Naive thymus-derived CD4-positive, alpha-beta T cell (primary cell): ENCODE measurements at regions of chr2 and their contacts with region 1.

Region 1: DNA sequence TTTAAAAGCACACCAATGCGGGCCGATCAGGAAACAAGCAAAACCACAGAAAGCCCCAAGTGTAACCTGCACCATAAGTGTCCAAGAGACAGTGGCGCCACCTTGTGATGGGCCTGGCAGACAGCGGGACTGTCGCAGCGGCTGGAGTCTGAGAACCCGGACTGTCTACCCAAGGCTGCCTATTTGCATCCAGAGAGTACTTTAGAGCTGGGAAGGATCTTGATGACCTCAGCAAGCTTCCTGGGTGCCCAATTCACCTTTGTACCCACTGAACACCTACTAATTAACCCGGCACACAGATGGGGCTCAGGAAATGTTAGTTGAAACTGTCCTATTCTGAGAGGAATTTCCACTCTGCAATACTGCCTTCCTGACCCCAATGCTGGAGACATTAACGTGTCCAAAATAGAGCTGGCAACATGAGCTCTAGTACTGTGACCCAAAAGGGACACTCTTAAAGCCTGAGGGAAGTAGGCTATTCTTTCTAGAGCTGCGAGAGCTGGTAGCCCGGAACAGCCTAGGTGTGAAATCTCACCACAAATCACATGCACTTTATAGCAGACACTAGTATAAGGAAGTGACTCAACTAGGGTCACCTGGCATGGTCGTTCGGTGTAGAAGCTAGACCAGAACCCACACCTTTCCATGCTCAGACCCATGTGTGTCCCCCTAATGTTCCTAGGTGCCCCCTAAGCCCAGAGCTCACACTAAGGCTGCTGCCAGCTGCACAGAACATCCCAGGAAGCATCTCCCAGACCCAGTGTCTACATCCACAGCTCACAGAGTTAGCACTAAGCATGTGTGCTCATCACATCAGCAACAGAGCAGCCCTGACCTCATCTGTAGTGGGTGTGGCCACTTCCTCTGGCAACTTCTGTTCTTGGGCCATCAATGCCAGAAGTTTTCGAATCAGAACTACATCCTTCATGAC is 25.4 kb downstream of the POLR1A start:
- DNase-seq: peak; percentile 65 to 83 (median 78)
- ATAC-seq: peak; percentile 85
- H3K4me3 ChIP-seq: no peak overlapping the region
- H3K4me3 Mint-ChIP-seq: peak overlapping the region in 3 of 10 donors; percentile 36 to 40 (median 37)
- H3K27ac ChIP-seq: no peak overlapping the region
- H3K27ac Mint-ChIP-seq: peak overlapping the region in 5 of 9 donors; percentile 19 to 75 (median 53)
- H3K4me1 ChIP-seq: peaks cover 10 to 22% of the 10 kb centered on the region in 2 donors
- H3K4me1 Mint-ChIP-seq: peaks cover 0 to 46% (median 30%) of the 10 kb centered on the region in 7 donors
- H3K27me3 ChIP-seq: no peaks in the 10 kb centered on the region
- H3K27me3 Mint-ChIP-seq: no peaks in the 10 kb centered on the region

Region 2: DNA sequence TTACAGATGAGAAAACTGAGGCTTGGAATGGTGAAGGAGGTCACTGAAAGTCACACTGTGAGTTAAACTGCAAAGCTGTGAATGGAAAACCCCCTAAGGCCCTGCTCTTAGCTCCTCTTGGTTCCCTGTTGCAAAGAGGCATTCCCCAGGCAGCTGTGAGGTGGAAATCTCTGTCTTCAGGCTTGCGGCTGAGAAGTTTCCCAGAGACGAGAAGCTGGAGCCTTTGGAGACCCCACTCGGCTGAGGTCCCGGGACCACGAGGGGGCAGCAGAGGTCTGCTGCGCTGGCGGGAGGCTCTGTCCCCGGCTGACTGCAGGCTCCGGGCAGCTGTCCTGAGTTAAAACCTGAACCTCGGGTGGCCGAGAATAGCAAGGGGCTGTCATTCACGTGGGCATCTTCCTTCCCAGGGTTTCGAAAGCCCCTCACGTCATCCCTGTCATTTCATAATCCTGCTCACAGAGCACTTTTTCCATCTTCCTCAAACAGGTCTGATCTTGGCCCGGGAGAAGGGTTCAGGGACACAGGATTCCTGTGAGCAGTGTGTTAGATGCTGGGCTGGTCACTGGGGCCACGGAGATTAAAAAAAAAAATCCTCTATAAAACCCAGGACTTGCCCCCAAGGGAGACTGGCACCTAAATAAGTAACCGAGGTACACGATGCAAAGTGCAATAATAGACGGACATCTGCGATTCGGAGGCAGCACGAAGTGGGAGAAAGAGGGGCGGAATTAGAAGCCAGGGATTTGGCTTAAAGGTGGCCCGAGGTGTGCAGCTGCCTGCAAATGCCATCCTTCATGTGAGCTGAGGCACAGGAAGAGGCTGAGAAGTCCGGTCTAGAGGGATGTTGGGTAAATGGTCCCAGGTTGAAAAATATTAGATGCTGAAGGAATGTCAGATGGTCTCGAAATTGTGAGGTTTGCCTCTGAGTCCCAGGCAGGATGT is 351.1 kb before region 1 on chr2:
- CTCF ChIA-PET with region 1: interaction called, 10 read pairs
- POLR2A ChIA-PET with region 1: no interaction called
- intact Hi-C with region 1: loop called (anchors 1 to 2 kb)
- DNase-seq: peak; percentile 16 to 84 (median 58)
- ATAC-seq: peak; percentile 88
- H3K4me3 ChIP-seq: no peak overlapping the region
- H3K4me3 Mint-ChIP-seq: no peak overlapping the region
- H3K27ac ChIP-seq: no peak overlapping the region
- H3K27ac Mint-ChIP-seq: peak overlapping the region in 1 of 9 donors; percentile 12
- H3K4me1 ChIP-seq: peaks cover 0 to 8% of the 10 kb centered on the region in 2 donors
- H3K4me1 Mint-ChIP-seq: peaks cover 0 to 9% (median 0%) of the 10 kb centered on the region in 7 donors
- H3K27me3 ChIP-seq: no peaks in the 10 kb centered on the region
- H3K27me3 Mint-ChIP-seq: peaks cover 0 to 30% (median 8%) of the 10 kb centered on the region in 5 donors

Region 3: DNA sequence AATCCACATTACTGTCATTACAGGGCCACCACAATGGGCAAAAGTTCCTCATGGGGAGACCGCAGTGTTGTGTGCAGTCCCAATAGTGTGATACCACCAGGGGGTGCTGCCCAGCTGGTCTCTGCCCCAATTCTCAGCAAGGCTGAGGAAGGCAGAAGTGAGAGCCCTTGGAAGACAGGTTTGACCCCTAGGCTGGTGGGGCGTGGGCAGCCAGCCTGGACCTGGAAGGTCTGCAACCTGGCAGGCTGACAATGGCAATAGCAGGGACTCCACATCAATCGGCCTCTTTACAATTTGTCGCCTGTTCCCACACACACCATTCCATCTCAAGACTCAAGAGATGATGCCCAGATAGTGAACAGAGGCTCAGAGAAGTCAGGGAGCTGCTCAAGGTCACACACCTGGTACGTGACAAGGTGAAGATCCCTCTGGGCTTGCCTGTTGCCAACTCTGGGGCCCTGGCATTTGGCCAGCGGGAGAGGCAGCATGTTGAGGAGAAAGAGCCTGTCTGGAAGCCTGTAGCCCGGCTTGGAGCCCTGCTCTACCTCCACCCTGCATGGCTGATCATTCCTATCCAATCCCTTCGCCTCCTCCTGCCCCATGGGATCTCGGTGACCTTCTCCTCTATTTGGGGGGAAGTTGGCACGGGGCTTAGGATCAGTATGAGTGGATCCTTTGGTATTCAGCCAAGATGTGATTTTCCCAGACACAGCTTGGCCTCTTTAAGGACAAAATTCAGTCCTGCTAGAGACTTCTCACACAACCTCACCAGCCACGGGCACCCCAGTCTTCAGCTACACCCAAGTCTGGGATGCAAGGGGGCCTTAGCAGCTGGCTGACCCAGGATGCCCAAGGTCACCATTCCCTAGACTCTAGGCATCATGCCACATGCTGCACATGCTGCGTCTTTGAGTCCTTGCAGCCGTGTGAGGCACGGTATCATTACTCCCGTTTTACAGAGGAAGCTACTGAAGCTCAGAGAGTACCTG is 329.4 kb before region 1 on chr2:
- CTCF ChIA-PET with region 1: interaction called, 3 read pairs
- POLR2A ChIA-PET with region 1: no interaction called
- intact Hi-C with region 1: loop called (anchors 1 to 5 kb)
- DNase-seq: peak in 7 of 9 donors; percentile 36 to 62 (median 42)
- ATAC-seq: peak; percentile 79
- H3K4me3 ChIP-seq: no peak overlapping the region
- H3K4me3 Mint-ChIP-seq: peak overlapping the region in 1 of 10 donors; percentile 44
- H3K27ac ChIP-seq: no peak overlapping the region
- H3K27ac Mint-ChIP-seq: no peak overlapping the region
- H3K4me1 ChIP-seq: peaks cover 9 to 13% of the 10 kb centered on the region in 2 donors
- H3K4me1 Mint-ChIP-seq: peaks cover 5 to 20% (median 17%) of the 10 kb centered on the region in 7 donors
- H3K27me3 ChIP-seq: peaks cover 6 to 13% of the 10 kb centered on the region in 2 donors
- H3K27me3 Mint-ChIP-seq: peaks cover 47 to 89% (median 49%) of the 10 kb centered on the region in 5 donors

Region 4: GRCh38 chr2:85826990-85827878 is 253.0 kb before region 1 on chr2:
- CTCF ChIA-PET with region 1: interaction called, 219 read pairs
- POLR2A ChIA-PET with region 1: interaction called, 7 read pairs
- intact Hi-C with region 1: loop called (anchors 1 kb)
- DNase-seq: peak; percentile 64 to 83 (median 79)
- ATAC-seq: peak; percentile 99
- H3K4me3 ChIP-seq: peak overlapping the region; percentile 49
- H3K4me3 Mint-ChIP-seq: peak overlapping the region in 7 of 10 donors; percentile 8 to 65 (median 55)
- H3K27ac ChIP-seq: no peak overlapping the region
- H3K27ac Mint-ChIP-seq: peak overlapping the region in 8 of 9 donors; percentile 7 to 70 (median 63)
- H3K4me1 ChIP-seq: peaks cover 4 to 5% of the 10 kb centered on the region in 2 donors
- H3K4me1 Mint-ChIP-seq: peaks cover 18 to 31% (median 25%) of the 10 kb centered on the region in 7 donors
- H3K27me3 ChIP-seq: no peaks in the 10 kb centered on the region
- H3K27me3 Mint-ChIP-seq: peaks cover 0 to 31% (median 0%) of the 10 kb centered on the region in 5 donors